ENCODE measurements at regions of chr2 and their contacts with region 1.

Region 1: DNA sequence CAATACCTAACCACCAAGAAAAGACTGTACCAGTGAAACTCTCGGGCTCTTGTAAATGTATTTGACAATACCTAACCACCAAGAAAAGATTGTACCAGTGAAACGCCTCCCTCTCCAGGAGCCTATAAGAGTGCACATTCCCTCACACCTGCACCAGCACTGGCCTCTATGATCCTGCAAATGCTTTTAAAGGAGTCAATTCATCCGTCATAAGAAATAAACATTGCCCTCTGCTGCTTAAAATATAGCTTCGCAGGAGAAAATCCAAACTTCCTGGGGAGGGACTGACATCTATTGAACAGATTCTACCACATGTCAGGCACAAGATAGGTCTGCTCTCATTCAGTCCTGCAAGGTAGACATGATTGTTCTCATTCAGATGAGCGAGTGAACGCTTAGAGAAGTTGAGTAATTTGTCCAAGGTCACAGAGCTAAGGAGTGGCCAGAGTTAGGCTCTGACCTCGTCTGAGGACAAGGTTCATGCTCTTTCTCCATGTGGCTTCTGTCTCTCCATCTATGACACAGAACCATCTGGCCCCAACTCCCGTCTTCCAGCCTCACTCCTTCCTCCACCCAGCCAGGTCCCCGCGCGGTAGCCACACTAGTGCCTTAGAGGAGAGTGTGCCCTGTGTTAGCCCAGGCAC is 38.7 kb downstream of the MCFD2 start:
- DNase-seq: peak; percentile 83
- ATAC-seq: peak; percentile 81
- H3K4me3 ChIP-seq: no peak overlapping the region
- H3K27ac ChIP-seq: peak overlapping the region; percentile 13; the same call in 1 of the 2 replicates
- H3K4me1 ChIP-seq: peaks cover 16 to 40% of the 10 kb centered on the region in 2 experiments
- H3K27me3 ChIP-seq: no peaks in the 10 kb centered on the region
- CTCF ChIP-seq: peak; percentile 31 to 97 (median 73); a peak in 5 of 6 replicates
- POLR2A ChIP-seq: no peak
- RAD21 ChIP-seq: peak; percentile 94

Region 2: DNA sequence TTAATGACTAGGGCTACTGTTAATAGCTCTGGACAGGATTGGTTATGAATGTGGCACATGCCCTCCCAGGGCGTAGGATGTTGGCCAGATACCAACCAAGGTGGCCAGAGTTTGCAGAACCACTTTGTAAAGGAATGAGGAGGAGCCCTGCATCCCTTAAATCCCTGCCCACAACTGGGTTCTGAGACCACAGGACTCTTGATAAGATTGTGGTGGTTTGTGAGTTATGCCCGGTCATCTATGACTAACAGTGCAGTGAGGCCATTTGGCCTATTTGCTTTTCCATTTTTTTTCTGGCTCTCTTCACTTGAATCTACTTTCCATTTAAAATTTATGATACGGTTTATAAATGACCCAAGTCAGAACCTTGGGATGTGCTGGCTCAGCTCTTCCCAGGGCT is 930.8 kb before region 1 on chr2:
- CTCF ChIA-PET with region 1: no interaction called
- POLR2A ChIA-PET with region 1: no interaction called
- RAD21 ChIA-PET with region 1: no interaction called
- intact Hi-C with region 1: no loop called
- DNase-seq: peak; percentile 77
- ATAC-seq: peak; percentile 83
- H3K4me3 ChIP-seq: peak overlapping the region in 1 of 2 experiments; percentile 8; a peak in 1 of 4 replicates
- H3K27ac ChIP-seq: peak overlapping the region; percentile 55; the same call in 1 of the 2 replicates
- H3K4me1 ChIP-seq: peaks cover 52 to 69% of the 10 kb centered on the region in 2 experiments
- H3K27me3 ChIP-seq: no peaks in the 10 kb centered on the region
- CTCF ChIP-seq: no peak
- POLR2A ChIP-seq: no peak
- RAD21 ChIP-seq: peak; percentile 14; the same call in 1 of the 2 replicates

Region 3: GRCh38 chr2:46632349-46632748 is 244.5 kb before region 1 on chr2:
- CTCF ChIA-PET with region 1: interaction called, 3 read pairs
- POLR2A ChIA-PET with region 1: no interaction called
- RAD21 ChIA-PET with region 1: no interaction called
- intact Hi-C with region 1: loop called (anchors 1 kb)
- DNase-seq: peak; percentile 43
- ATAC-seq: peak; percentile 50; the same call in 1 of the 2 replicates
- H3K4me3 ChIP-seq: no peak overlapping the region
- H3K27ac ChIP-seq: no peak overlapping the region
- H3K4me1 ChIP-seq: no peaks in the 10 kb centered on the region
- H3K27me3 ChIP-seq: no peaks in the 10 kb centered on the region
- CTCF ChIP-seq: peak; percentile 50 to 81 (median 67)
- POLR2A ChIP-seq: no peak
- RAD21 ChIP-seq: peak; percentile 82

Region 4: DNA sequence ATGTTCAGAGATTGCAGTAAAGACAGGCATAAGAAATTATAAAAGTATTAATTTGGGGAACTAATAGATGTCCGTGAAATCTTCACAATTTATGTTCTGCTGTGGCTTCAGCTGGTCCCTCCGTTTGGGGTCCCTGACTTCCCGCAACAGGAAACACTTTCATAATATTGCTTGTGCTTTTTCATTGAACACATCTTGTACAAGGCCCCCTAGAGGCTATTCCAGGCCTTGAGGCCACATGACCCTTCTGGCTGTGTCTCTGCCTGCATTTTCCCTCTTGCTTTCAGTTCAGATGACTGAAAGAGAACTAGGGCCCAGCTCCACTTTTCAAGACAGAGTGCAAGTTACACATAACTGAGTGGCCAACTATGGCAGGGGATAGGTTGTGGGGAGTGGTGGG is 233.4 kb before region 1 on chr2:
- CTCF ChIA-PET with region 1: no interaction called
- POLR2A ChIA-PET with region 1: no interaction called
- RAD21 ChIA-PET with region 1: no interaction called
- intact Hi-C with region 1: no loop called
- DNase-seq: no peak
- ATAC-seq: peak; percentile 62
- H3K4me3 ChIP-seq: no peak overlapping the region
- H3K27ac ChIP-seq: no peak overlapping the region
- H3K4me1 ChIP-seq: peaks cover 2 to 11% of the 10 kb centered on the region in 2 experiments; a peak in 2 of 4 replicates
- H3K27me3 ChIP-seq: no peaks in the 10 kb centered on the region
- CTCF ChIP-seq: peak in 2 of 3 experiments; percentile 31 to 41; a peak in 3 of 6 replicates
- POLR2A ChIP-seq: no peak
- RAD21 ChIP-seq: no peak

Region 5: DNA sequence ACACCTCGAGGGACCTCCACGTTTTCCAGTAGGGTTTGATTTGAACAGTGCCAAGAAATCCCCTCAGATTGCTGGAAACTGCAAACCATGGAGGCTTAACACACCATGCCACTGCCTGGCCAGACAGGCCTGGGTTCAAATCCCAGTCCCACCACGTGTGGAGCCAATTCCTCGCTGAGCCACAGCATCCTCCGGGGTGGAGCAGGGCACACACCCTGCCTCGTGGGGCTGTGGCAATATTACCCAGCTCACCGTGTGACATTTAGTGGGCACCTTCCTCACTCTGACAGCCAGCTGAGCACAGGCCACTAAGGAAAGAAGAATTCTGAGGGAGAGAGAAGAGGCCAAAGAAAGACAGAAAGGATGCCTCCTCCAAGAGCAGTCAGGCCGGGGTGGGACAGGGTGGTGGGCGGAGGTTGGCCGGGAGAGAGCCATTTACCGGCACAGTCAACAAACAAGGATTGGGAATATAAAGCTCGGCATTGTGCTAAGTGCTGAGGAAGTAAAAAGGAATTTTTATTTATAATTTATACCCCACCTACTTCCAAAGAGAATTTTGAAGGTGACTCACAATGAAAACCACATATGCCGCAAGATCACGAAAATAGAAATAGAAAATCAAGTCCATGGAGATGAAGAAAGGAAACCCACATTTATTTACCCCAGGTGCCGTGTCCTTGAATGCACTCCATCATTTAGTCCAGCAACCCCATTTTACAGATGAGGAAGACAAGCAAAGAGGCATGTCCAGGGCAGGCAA is 72.8 kb before region 1 on chr2:
- CTCF ChIA-PET with region 1: interaction called, 3 read pairs
- POLR2A ChIA-PET with region 1: no interaction called
- RAD21 ChIA-PET with region 1: interaction called in 1 of 2 experiments, 4 read pairs
- intact Hi-C with region 1: loop called (anchors 5 kb)
- DNase-seq: peak; percentile 68
- ATAC-seq: peak; percentile 83
- H3K4me3 ChIP-seq: 0 out of 4 replicates have a peak overlapping the region, but pooled peaks of 1 of the 2 experiments have one; percentile 22
- H3K27ac ChIP-seq: peak overlapping the region; percentile 65
- H3K4me1 ChIP-seq: peaks cover 44 to 72% of the 10 kb centered on the region in 2 experiments
- H3K27me3 ChIP-seq: no peaks in the 10 kb centered on the region
- CTCF ChIP-seq: no peak
- POLR2A ChIP-seq: no peak
- RAD21 ChIP-seq: peak; percentile 25; the same call in 1 of the 2 replicates